ENCODE measurements at regions of chr1 and their contacts with region 1.

Region 1: DNA sequence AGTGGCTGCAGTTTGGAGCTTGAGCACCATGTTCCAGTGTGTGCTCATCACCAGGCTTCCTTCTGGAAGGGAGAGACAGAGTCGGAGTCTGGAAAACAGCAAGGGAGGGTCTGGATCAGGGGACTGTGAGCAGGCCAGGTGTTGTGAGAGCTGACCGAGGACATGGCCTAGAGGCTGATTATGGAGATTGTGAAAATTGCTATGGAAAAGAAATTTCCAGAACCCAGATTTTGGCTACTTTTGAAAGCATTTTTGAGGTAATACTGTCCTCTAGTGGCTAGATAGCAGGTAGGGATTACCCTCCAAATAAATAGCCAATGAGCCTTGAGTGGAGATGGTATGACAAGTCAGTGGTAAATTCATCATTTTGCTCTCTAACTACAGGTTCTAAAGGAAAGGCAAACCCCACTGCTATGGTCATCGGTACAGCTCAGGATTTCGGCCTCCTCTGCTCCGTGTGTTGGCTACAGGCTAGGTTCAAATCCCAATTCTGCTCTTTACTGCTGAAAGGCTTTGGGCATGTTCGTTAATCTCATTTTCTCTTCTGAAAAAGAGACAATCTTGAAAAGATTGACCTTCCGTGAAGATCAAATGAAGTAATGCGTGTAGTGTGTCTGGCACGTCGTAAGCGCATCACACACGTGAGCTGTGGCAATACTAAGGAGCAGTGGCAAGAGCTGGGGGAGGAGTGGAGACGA is 1.0 kb upstream of the HAO2 start:
- DNase-seq: no peak
- H3K4me3 Mint-ChIP-seq: no peak overlapping the region
- H3K27ac Mint-ChIP-seq: no peak overlapping the region
- H3K4me1 Mint-ChIP-seq: no peaks in the 10 kb centered on the region
- H3K27me3 Mint-ChIP-seq: peaks cover 8% of the 10 kb centered on the region

Region 2: DNA sequence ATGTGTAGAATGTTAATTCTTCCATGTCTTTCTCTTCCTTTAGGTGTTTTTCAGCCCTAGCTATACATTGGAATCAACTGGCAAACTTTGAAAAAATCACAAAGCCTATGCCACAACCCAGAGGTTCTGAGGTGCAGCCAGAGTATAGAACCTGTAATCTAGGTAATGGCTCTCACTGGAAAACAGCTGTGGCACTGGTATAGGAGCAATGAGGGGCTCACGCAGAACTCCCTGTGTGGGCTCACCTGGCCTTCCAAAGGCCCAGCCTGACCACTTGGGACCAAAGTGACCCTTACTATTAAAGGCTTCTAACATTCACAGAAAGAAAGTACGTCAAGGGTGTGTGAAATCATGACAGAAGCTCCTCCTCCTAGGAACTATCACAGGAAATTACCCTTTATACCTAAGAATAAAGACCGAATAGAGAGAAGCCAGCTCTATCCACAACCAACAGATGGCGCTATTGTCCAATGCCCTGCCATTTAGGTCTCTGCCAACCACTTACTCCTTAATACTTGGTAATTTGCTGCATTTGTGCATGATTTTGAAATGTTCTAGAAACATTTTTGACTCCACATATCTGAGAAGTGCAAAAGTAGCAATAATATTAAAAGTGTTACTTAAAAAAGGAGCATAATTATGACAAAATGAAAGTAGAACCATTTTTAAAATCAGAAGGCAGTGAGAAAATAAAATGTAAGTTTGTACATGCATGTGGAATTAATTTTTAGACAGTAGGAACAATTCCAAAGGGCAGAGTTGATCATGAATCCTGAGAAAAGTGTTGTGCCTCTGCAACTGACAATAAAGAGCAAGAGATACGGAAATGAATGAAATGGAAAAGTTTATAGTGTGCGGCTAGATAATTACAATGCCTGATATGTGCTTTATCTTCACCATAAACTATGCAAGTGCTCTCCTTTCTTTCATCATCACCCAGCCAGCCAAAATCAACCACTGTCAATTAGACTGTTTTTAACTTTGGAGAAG is 92.1 kb before region 1 on chr1:
- CTCF ChIA-PET with region 1: interaction called, 17 read pairs
- DNase-seq: peak; percentile 63
- H3K4me3 Mint-ChIP-seq: no peak overlapping the region
- H3K27ac Mint-ChIP-seq: no peak overlapping the region
- H3K4me1 Mint-ChIP-seq: no peaks in the 10 kb centered on the region
- H3K27me3 Mint-ChIP-seq: peaks cover 7% of the 10 kb centered on the region

Region 3: DNA sequence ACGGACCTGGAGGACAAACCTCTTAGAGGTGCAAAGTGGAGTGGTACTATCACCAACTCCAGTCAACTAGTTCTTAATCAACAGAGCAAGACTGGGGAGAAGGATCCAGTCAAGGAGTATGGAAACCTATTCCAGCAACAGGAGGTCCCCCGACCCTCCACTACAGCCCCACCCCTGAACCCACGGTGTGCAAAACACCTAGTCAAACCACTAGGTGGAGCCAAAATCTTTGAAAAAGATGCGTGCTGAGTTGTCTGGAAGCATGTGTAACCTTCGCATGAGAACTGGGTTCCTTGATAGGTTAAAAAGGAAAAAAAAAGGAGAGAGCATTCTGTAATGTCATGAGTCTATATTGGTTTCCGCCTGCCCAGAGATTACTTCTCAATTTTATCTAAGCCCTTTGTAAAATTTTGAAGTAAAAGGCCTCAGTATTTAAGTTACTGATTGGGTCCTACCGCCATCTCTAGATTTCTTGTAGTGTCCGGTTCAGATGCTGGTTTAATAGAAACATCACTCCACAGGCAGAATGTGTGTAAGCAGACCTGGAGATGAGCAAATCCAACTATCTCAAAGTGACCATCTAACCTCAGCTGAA is 80.9 kb before region 1 on chr1:
- CTCF ChIA-PET with region 1: interaction called, 12 read pairs
- DNase-seq: peak; percentile 39
- H3K4me3 Mint-ChIP-seq: no peak overlapping the region
- H3K27ac Mint-ChIP-seq: no peak overlapping the region
- H3K4me1 Mint-ChIP-seq: no peaks in the 10 kb centered on the region
- H3K27me3 Mint-ChIP-seq: peaks cover 10% of the 10 kb centered on the region

Region 4: DNA sequence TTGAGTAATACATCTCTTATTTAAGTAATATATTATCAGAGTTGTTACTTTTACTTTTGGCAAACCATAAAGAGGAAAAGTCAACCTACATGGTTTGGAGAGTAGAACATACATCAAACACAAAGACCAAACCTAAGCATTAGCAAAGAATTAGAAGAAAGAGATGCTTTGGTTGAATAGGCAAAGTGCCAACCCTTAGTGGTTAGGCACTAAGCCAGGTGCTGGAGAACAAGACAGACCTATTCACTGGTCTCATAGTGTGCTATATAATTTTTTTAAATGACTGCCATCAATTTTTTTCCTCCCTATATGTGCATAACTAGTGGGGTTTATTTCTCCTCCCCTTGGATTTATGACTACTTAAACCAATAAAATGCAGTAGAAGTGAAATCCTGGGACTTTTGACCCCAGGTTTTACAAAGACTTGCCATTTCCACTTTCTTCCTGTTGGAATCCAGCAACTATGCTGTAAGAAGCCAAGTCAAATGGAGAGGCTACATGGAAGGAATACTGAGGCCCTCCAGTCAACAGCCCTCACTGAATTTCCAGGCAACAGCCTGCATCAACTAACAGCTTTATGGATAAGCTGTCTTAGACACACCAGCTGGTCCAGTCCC is 68.8 kb before region 1 on chr1:
- CTCF ChIA-PET with region 1: no interaction called
- DNase-seq: no peak
- H3K4me3 Mint-ChIP-seq: no peak overlapping the region
- H3K27ac Mint-ChIP-seq: no peak overlapping the region
- H3K4me1 Mint-ChIP-seq: peaks cover 13% of the 10 kb centered on the region
- H3K27me3 Mint-ChIP-seq: peaks cover 9% of the 10 kb centered on the region